ENCODE measurements at regions of chr2 and their contacts with region 1.

Region 1: DNA sequence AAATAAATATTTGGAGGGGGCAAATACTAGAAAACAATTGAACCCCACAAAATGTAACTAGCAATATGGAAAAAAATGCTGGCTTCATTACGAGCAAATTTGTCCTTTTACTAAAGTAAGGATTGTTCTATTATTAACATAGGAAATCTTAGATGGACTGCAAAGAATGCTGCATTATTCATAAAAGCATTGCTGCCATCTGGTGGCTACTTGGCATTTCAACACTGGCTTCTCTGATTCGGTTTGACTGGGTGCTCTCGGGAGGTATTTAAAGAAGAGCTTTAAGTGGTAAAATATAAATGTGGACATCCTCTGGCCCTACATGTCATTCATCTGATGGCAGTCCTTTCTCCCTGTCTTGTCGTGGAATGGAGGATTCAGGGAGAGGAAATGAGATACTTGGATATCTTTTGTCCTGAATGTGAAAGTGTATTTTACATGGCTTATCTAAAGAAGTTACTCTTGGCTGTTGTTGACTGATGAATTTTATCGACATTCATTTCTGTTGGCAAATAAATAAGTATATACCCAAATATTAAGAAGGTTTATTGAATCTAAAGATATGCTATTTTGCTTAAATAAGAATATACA is 130.2 kb downstream of the ARHGAP15 start:
- DNase-seq: peak; percentile 78
- ATAC-seq: no peak
- H3K4me3 ChIP-seq: no peak overlapping the region
- H3K4me3 Mint-ChIP-seq: peak overlapping the region; percentile 2
- H3K27ac ChIP-seq: peak overlapping the region in 1 of 2 donors; percentile 79
- H3K27ac Mint-ChIP-seq: peak overlapping the region; percentile 10
- H3K4me1 ChIP-seq: peaks cover 51 to 55% of the 10 kb centered on the region in 2 donors
- H3K4me1 Mint-ChIP-seq: peaks cover 66% of the 10 kb centered on the region
- H3K27me3 ChIP-seq: no peaks in the 10 kb centered on the region
- H3K27me3 Mint-ChIP-seq: no peaks in the 10 kb centered on the region
- CTCF ChIP-seq: peak; percentile 92

Region 2: GRCh38 chr2:143034292-143035074 is 225.0 kb before region 1 on chr2:
- CTCF ChIA-PET with region 1: interaction called, 51 read pairs
- POLR2A ChIA-PET with region 1: no interaction called
- intact Hi-C with region 1: loop called (anchors 1 kb)
- DNase-seq: peak; percentile 85
- ATAC-seq: peak; percentile 97
- H3K4me3 ChIP-seq: no peak overlapping the region
- H3K4me3 Mint-ChIP-seq: no peak overlapping the region
- H3K27ac ChIP-seq: no peak overlapping the region
- H3K27ac Mint-ChIP-seq: no peak overlapping the region
- H3K4me1 ChIP-seq: peaks cover 10 to 11% of the 10 kb centered on the region in 2 donors
- H3K4me1 Mint-ChIP-seq: peaks cover 9% of the 10 kb centered on the region
- H3K27me3 ChIP-seq: no peaks in the 10 kb centered on the region
- H3K27me3 Mint-ChIP-seq: no peaks in the 10 kb centered on the region
- CTCF ChIP-seq: peak; percentile 99

Region 3: GRCh38 chr2:143128681-143129580 is 130.5 kb before region 1 on chr2 and contains the start of gene ARHGAP15:
- CTCF ChIA-PET with region 1: interaction called, 19 read pairs
- POLR2A ChIA-PET with region 1: no interaction called
- intact Hi-C with region 1: no loop called
- DNase-seq: peak; percentile 90
- ATAC-seq: peak; percentile 92
- H3K4me3 ChIP-seq: peak within 1 kb of the TSS; percentile 44 to 93 (median 57)
- H3K4me3 Mint-ChIP-seq: peak within 1 kb of the TSS; percentile 78
- H3K27ac ChIP-seq: peak within 1 kb of the TSS; percentile 92
- H3K27ac Mint-ChIP-seq: peak within 1 kb of the TSS; percentile 99
- H3K4me1 ChIP-seq: peaks cover 46 to 51% of the 10 kb centered on the region in 2 donors
- H3K4me1 Mint-ChIP-seq: peaks cover 52% of the 10 kb centered on the region
- H3K27me3 ChIP-seq: no peaks in the 10 kb centered on the region
- H3K27me3 Mint-ChIP-seq: no peaks in the 10 kb centered on the region
- CTCF ChIP-seq: no peak
- total RNA-seq, gene ARHGAP15: 187 and 198 TPM in 2 replicates

Region 4: GRCh38 chr2:143217512-143218115 is 41.8 kb before region 1 on chr2:
- CTCF ChIA-PET with region 1: interaction called, 33 read pairs
- POLR2A ChIA-PET with region 1: no interaction called
- intact Hi-C with region 1: loop called (anchors 2 kb)
- DNase-seq: no peak
- ATAC-seq: peak; percentile 17
- H3K4me3 ChIP-seq: no peak overlapping the region
- H3K4me3 Mint-ChIP-seq: no peak overlapping the region
- H3K27ac ChIP-seq: peak overlapping the region in 1 of 2 donors; percentile 57
- H3K27ac Mint-ChIP-seq: peak overlapping the region; percentile 84
- H3K4me1 ChIP-seq: no peaks in the 10 kb centered on the region
- H3K4me1 Mint-ChIP-seq: peaks cover 16% of the 10 kb centered on the region
- H3K27me3 ChIP-seq: no peaks in the 10 kb centered on the region
- H3K27me3 Mint-ChIP-seq: no peaks in the 10 kb centered on the region
- CTCF ChIP-seq: no peak

Region 5: DNA sequence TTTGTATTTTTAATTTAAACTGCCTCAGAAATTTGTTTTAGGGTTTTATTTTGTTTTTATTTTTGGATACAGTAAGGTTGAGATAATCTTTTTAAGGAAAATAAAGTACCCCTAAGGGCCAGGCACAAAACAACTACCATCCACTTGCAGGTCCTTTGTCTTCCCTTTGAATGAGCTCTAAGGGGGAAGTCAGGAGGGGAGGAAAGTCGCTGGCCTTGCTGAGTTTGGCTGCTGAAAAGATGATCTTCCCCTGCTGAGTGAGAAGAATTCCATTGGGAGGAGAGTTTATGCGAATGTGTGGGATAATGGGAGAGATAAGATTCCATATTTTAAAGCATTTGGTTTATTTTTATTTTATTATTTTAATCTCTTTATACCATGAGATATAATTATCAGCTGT is 29.5 kb before region 1 on chr2:
- CTCF ChIA-PET with region 1: interaction called, 19 read pairs
- POLR2A ChIA-PET with region 1: no interaction called
- intact Hi-C with region 1: no loop called
- DNase-seq: no peak
- ATAC-seq: no peak
- H3K4me3 ChIP-seq: no peak overlapping the region
- H3K4me3 Mint-ChIP-seq: no peak overlapping the region
- H3K27ac ChIP-seq: no peak overlapping the region
- H3K27ac Mint-ChIP-seq: no peak overlapping the region
- H3K4me1 ChIP-seq: no peaks in the 10 kb centered on the region
- H3K4me1 Mint-ChIP-seq: peaks cover 13% of the 10 kb centered on the region
- H3K27me3 ChIP-seq: no peaks in the 10 kb centered on the region
- H3K27me3 Mint-ChIP-seq: no peaks in the 10 kb centered on the region
- CTCF ChIP-seq: no peak

Region 6: DNA sequence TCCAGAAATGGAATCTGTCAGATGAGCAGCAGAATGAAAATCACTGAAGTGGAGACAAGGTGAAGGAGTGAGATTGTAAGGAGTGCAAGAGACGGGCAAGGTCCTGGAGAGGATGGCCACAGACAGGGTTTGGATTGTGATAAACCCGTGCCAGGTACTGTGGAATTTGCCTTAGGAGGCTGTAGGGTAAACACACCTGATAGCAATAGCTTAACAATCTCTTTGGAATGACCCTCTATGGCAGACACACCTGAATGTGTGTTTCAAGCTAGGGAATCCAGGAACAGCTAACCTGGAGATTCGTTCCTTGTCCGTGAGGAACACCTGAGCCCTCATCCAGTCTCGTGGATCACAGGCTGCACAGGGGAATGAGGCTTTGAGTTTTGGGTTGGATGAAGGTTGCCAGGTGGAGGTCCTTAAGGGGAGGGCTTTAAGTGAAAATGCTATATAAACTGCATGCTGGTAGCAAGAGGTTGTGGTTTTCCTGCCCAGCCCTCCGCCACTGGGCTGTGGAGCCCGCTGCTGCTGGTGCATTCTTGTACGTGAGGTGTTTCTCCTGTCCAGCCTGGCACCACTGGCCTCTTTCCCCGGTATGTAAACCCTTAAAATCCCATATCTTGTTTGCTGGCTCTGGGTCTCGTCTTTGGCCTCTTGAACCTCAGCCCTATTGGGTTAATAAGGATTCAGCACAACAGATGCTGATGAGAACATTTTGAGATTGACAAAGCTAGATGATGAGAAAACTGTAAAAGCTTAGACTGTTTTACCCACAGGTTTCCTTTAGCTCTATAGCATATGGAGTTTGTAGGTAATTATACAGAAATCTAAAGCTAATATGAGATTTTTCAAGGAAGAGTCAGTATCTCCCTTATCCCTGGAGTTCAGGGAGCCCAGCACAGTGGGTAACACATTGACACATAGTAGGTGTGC is 12.4 kb before region 1 on chr2:
- CTCF ChIA-PET with region 1: interaction called, 28 read pairs
- POLR2A ChIA-PET with region 1: no interaction called
- intact Hi-C with region 1: no loop called
- DNase-seq: no peak
- ATAC-seq: no peak
- H3K4me3 ChIP-seq: no peak overlapping the region
- H3K4me3 Mint-ChIP-seq: peak overlapping the region; percentile 23
- H3K27ac ChIP-seq: peak overlapping the region in 1 of 2 donors; percentile 31
- H3K27ac Mint-ChIP-seq: peak overlapping the region; percentile 75
- H3K4me1 ChIP-seq: peaks cover 19 to 42% of the 10 kb centered on the region in 2 donors
- H3K4me1 Mint-ChIP-seq: peaks cover 17% of the 10 kb centered on the region
- H3K27me3 ChIP-seq: no peaks in the 10 kb centered on the region
- H3K27me3 Mint-ChIP-seq: no peaks in the 10 kb centered on the region
- CTCF ChIP-seq: no peak

Region 7: DNA sequence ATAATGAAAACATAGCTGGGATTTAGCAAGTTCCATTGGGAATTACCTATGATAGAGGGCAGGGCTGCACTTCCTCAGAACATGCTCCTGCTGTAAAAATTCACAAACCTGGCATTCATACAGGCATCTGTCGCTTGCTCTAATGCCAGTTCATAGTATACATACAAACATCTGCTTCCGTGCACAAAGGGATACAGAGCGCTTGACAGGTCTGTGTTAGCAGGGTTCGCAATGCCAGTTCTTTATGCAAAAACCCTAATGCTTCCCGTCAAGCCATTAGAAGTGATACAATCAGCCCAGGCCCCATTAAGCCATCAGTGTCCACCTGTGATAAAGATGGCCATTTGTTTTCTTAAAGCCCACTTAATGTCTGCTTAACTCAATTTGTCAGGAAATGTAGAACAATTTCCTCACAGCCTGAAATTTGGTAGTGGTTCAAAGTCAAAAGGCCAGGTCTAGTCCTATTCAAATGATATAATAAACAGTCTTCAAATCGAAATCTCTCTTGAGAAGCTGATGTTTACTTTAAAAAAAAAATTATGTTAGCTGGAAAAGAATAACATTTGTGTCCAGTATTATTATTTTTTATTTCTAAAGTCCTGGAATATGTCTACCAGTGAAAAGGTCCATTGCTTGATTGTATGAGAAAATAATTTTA is 426.1 kb after region 1 on chr2:
- CTCF ChIA-PET with region 1: no interaction called
- POLR2A ChIA-PET with region 1: no interaction called
- intact Hi-C with region 1: no loop called
- DNase-seq: no peak
- ATAC-seq: no peak
- H3K4me3 ChIP-seq: no peak overlapping the region
- H3K4me3 Mint-ChIP-seq: no peak overlapping the region
- H3K27ac ChIP-seq: no peak overlapping the region
- H3K27ac Mint-ChIP-seq: no peak overlapping the region
- H3K4me1 ChIP-seq: no peaks in the 10 kb centered on the region
- H3K4me1 Mint-ChIP-seq: peaks cover 2% of the 10 kb centered on the region
- H3K27me3 ChIP-seq: no peaks in the 10 kb centered on the region
- H3K27me3 Mint-ChIP-seq: no peaks in the 10 kb centered on the region
- CTCF ChIP-seq: no peak

Measured in B cell (primary cell).